Transverse colon (tissue), 4 donors: ENCODE measurements at regions of chr4 and their contacts with region 1.

Region 1: DNA sequence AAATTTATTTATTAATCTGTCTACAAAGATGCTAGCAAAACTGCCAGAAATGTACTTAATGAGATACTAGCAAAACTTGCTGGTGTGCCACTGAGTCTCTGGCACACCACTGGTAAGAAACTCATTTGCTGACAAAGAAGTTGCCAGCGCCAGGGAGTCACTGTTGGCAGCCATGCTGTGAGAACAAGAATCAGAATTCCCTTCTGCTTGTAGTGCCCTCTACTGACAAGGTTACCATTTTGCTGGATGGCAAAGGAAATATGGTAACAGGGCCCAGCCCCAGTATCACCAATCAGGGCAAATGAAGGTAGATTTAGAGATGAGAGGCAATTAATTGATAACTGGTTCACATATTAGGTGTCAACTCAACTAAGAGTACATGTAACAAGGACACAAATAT is 750.1 kb upstream of the ADGRL3 start:
- DNase-seq: no peak
- H3K4me3 ChIP-seq: no peak overlapping the region
- H3K27ac ChIP-seq: no peak overlapping the region
- H3K4me1 ChIP-seq: no peaks in the 10 kb centered on the region
- H3K27me3 ChIP-seq: no peaks in the 10 kb centered on the region
- CTCF ChIP-seq: no peak
- EP300 ChIP-seq: no peak
- POLR2A ChIP-seq: no peak

Region 2: GRCh38 chr4:61994036-61994435 is 1544.0 kb after region 1 on chr4:
- in situ Hi-C with region 1: no loop called
- intact Hi-C with region 1: loop called (anchors 5 kb)
- DNase-seq: peak; percentile 12
- H3K4me3 ChIP-seq: no peak overlapping the region
- H3K27ac ChIP-seq: no peak overlapping the region
- H3K4me1 ChIP-seq: no peaks in the 10 kb centered on the region
- H3K27me3 ChIP-seq: no peaks in the 10 kb centered on the region
- CTCF ChIP-seq: no peak
- EP300 ChIP-seq: no peak
- POLR2A ChIP-seq: no peak